Activated naive CD4-positive, alpha-beta T cell treated with anti-CD3 and anti-CD28 coated beads for 36 hours (primary cell): ENCODE measurements at regions of chr2 and their contacts with region 1.

Region 1: GRCh38 chr2:241315093-241315878 is at the start of gene HDLBP:
- DNase-seq: peak; percentile 100
- H3K4me3 Mint-ChIP-seq: peak within 1 kb of the TSS; percentile 100
- H3K27ac Mint-ChIP-seq: peak within 1 kb of the TSS; percentile 100
- H3K4me1 Mint-ChIP-seq: peaks cover 71% of the 10 kb centered on the region
- H3K27me3 Mint-ChIP-seq: no peaks in the 10 kb centered on the region
- total RNA-seq, gene HDLBP: 278 to 297 TPM

Region 2: GRCh38 chr2:240586198-240586918 is 728.9 kb before region 1 on chr2 and contains the start of gene CAPN10:
- CTCF ChIA-PET with region 1: no interaction called
- intact Hi-C with region 1: loop called (anchors 1 kb)
- DNase-seq: peak; percentile 97
- H3K4me3 Mint-ChIP-seq: peak within 1 kb of the TSS; percentile 92
- H3K27ac Mint-ChIP-seq: peak within 1 kb of the TSS; percentile 86
- H3K4me1 Mint-ChIP-seq: peaks cover 44% of the 10 kb centered on the region
- H3K27me3 Mint-ChIP-seq: no peaks in the 10 kb centered on the region
- total RNA-seq, gene CAPN10: 24.9 to 28.5 TPM

Region 3: GRCh38 chr2:241271641-241272297 is 43.5 kb before region 1 on chr2:
- CTCF ChIA-PET with region 1: no interaction called
- intact Hi-C with region 1: loop called (anchors 2 kb)
- DNase-seq: peak; percentile 54
- H3K4me3 Mint-ChIP-seq: peak overlapping the region; percentile 81
- H3K27ac Mint-ChIP-seq: peak overlapping the region; percentile 64
- H3K4me1 Mint-ChIP-seq: peaks cover 32% of the 10 kb centered on the region
- H3K27me3 Mint-ChIP-seq: no peaks in the 10 kb centered on the region

Region 4: DNA sequence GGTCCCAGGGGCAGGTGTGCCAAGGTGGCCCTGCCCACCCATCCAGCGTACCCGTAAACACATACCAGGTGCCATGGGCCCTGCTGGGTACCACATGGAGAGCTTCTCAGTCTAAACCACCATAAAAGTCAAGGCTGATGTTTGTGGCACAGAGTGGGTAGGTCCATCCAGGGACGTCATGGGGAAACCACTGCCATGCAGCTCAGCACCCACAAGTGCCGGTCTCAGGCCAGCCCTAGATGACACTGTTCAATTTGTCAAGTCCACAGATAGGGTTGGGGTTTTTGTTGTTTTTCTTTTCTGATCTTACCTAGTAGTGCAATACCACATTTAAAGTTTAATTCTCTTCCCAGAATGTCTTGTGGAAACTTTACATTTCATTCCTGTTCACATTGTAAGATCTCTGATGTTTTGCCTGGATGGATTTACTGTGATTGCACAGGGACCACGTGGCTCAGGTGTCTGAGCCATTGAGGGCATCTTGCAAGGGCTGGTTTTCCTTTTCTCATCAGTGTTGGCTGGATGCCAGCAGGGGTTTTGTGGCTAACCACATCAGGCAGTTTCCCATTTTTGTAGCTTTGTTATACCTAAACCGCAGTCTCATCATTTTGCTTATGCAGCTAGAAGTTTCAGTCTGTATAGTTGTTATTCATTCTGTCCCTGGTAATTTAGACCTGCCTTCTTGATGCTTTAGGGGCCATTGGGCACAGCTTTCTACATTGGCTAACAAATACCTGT is 128.4 kb after region 1 on chr2:
- CTCF ChIA-PET with region 1: no interaction called
- intact Hi-C with region 1: loop called (anchors 1 kb)
- DNase-seq: peak; percentile 98
- H3K4me3 Mint-ChIP-seq: no peak overlapping the region
- H3K27ac Mint-ChIP-seq: peak overlapping the region; percentile 22
- H3K4me1 Mint-ChIP-seq: peaks cover 24% of the 10 kb centered on the region
- H3K27me3 Mint-ChIP-seq: peaks cover 54% of the 10 kb centered on the region

Region 5: DNA sequence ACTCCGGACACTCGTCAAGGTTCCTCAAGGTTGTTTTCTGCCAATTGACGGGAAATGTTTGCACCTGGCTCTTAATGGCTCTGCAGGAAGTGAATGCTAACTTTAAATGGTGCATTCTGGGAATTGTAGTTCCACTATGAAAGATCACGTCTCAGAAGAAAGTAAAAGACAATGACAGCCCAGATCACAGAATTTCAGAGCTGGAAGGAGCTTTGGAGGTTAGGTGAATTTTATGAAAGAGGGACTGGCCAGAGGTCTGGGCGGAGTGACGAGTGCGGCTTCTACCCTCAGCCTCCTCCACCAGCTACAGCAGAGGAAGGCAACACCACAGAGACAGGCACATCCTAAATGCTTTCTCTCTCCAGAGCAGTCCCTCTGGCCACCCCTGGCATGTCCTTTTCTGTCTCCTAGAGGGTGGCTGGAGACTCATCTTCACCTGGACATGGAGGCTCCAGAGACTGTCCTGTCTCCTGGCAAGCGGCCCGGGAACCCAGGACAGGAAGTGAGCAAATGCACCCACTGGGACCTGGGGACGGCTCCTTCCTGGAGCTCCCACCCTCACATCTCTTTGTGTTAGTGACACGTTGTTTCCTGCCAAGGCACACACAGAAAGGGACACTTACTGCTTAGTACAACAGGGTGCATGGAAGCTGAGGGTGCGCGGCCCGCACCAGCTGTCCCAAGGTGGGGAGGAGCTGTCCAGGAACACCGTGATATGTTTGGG is 302.3 kb after region 1 on chr2:
- CTCF ChIA-PET with region 1: no interaction called
- intact Hi-C with region 1: loop called (anchors 1 kb)
- DNase-seq: peak; percentile 61
- H3K4me3 Mint-ChIP-seq: peak overlapping the region; percentile 75
- H3K27ac Mint-ChIP-seq: peak overlapping the region; percentile 90
- H3K4me1 Mint-ChIP-seq: peaks cover 47% of the 10 kb centered on the region
- H3K27me3 Mint-ChIP-seq: no peaks in the 10 kb centered on the region

Region 6: DNA sequence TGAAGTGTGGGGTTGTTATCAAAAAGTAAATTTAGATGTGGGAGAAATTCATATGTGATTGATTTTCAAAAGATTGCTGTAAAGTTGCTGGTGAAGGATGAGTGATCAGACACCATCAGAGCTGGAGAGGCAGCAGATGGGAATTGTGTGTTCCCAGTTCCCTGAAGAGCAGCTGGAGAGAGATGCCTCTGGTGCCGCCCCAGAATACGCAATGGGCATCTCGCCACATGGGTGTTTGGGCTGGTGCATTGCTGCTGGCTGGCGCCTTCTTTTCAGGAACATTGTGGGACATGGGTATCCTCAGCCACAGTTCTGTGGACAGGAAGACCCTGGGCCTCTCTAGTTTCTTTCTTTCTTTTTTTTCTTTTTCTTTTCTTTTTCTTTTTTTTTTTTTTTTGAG is 334.1 kb after region 1 on chr2:
- CTCF ChIA-PET with region 1: no interaction called
- intact Hi-C with region 1: no loop called
- DNase-seq: no peak
- H3K4me3 Mint-ChIP-seq: no peak overlapping the region
- H3K27ac Mint-ChIP-seq: no peak overlapping the region
- H3K4me1 Mint-ChIP-seq: peaks cover 9% of the 10 kb centered on the region
- H3K27me3 Mint-ChIP-seq: no peaks in the 10 kb centered on the region

Region 7: GRCh38 chr2:241702132-241703031 is 387.1 kb after region 1 on chr2:
- CTCF ChIA-PET with region 1: no interaction called
- intact Hi-C with region 1: loop called (anchors 1 kb)
- DNase-seq: peak; percentile 82
- H3K4me3 Mint-ChIP-seq: peak overlapping the region; percentile 82
- H3K27ac Mint-ChIP-seq: peak overlapping the region; percentile 61
- H3K4me1 Mint-ChIP-seq: peaks cover 24% of the 10 kb centered on the region
- H3K27me3 Mint-ChIP-seq: no peaks in the 10 kb centered on the region